ENCODE measurements at regions of chr1 and their contacts with region 1.

Region 1: DNA sequence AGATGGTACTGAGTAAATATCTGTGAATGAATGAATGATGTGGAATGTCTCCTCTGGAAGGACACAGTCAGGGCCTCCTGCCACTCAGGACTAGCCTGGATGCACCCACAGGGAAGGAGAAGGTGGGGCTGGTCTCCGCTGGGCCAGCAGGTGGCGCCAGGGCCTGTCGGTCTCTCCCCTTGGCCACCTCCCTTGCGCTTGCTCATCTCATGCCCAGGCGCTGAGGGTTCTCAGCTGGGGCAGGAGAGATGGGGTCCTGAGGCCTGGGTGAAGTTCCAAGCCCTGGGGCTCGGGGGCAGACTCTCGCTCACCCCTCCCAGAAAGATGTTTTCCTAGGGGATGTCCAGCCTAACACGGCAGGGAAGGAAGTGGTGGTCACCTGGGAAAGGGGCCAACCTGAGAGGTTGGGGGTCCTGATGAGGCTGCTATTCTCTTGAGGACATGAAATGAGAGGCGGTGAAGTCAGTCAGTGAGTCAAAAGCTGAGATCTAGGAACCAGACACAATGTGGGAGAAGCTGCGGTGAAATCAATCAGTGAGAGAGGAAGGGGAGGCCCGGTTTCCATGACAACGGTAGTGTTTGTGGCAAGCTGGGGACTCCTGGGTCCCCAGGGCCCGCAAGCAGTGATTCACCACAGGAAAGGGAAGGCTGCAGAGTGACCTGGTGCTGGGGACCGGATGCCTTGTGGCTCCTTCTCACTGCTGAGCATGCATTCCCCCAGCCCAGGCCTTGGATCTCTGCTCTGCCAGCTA is 14.6 kb upstream of the MEX3A start:
- DNase-seq: peak; percentile 93
- ATAC-seq: peak; percentile 87
- H3K4me3 ChIP-seq: no peak overlapping the region
- H3K27ac ChIP-seq: peak overlapping the region; percentile 79
- H3K4me1 ChIP-seq: peaks cover 38% of the 10 kb centered on the region
- H3K27me3 ChIP-seq: no peaks in the 10 kb centered on the region
- CTCF ChIP-seq: peak; percentile 97 to 99 (median 97)
- EP300 ChIP-seq: peak; percentile 94 to 97
- POLR2A ChIP-seq: no peak
- RAD21 ChIP-seq: peak; percentile 84

Region 2: GRCh38 chr1:156082309-156083091 is 14.3 kb before region 1 on chr1 and contains the start of gene MEX3A:
- CTCF ChIA-PET with region 1: interaction called, 8 read pairs
- POLR2A ChIA-PET with region 1: interaction called, 7 read pairs
- RAD21 ChIA-PET with region 1: interaction called, 4 read pairs
- SMC1A ChIA-PET with region 1: interaction called, 13 read pairs
- in situ Hi-C with region 1: no loop called
- intact Hi-C with region 1: no loop called
- DNase-seq: no peak
- ATAC-seq: peak; percentile 89
- H3K4me3 ChIP-seq: peak within 1 kb of the TSS; percentile 95
- H3K27ac ChIP-seq: no peak within 1 kb of the TSS
- H3K4me1 ChIP-seq: no peaks in the 10 kb centered on the region
- H3K27me3 ChIP-seq: peaks cover 0 to 2% of the 10 kb centered on the region in 2 experiments; a peak in 1 of 4 replicates
- CTCF ChIP-seq: no peak
- EP300 ChIP-seq: no peak
- POLR2A ChIP-seq: no peak
- RAD21 ChIP-seq: no peak
- polyA plus RNA-seq, gene MEX3A: 0.11 to 0.27 TPM

Region 3: DNA sequence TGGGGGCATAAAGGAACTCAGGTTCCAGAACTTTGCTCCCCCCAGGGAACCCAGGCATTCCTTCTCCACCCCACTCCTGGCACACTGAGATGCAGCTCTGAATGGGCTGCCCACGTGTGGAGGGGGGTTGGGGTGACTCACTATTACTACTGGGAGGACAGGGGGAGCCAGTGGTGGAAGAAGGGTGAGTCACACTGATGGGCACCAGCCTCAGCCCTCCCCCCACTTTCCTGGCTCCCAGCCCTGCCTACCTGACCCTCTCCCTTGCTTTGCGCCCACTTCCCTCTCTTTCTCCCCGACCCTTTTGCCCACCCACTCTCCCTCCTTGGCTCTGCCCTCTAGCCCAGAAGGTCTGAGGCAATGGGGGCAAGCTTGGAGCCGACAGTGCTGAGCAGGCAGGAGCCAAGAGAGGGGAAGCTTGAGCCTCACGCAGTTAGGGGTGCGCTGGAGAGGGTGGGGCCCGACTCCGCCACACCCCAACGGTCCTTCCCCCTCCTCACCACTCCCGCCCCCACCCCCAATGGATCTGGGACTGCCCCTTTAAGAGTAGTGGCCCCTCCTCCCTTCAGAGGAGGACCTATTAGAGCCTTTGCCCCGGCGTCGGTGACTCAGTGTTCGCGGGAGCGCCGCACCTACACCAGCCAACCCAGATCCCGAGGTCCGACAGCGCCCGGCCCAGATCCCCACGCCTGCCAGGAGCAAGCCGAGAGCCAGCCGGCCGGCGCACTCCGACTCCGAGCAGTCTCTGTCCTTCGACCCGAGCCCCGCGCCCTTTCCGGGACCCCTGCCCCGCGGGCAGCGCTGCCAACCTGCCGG is 17.5 kb after region 1 on chr1 and contains the start of gene LMNA:
- CTCF ChIA-PET with region 1: interaction called, 1,294 read pairs
- POLR2A ChIA-PET with region 1: interaction called, 25 read pairs
- RAD21 ChIA-PET with region 1: interaction called, 695 read pairs
- SMC1A ChIA-PET with region 1: interaction called, 874 read pairs
- in situ Hi-C with region 1: no loop called
- intact Hi-C with region 1: no loop called
- DNase-seq: peak; percentile 48
- ATAC-seq: peak; percentile 88
- H3K4me3 ChIP-seq: peak within 1 kb of the TSS; percentile 94
- H3K27ac ChIP-seq: peak within 1 kb of the TSS; percentile 53; the same call in 1 of the 2 replicates
- H3K4me1 ChIP-seq: peaks cover 12% of the 10 kb centered on the region
- H3K27me3 ChIP-seq: no peaks in the 10 kb centered on the region
- CTCF ChIP-seq: no peak
- EP300 ChIP-seq: no peak; a peak in 1 of 4 replicates
- POLR2A ChIP-seq: peak; percentile 82
- RAD21 ChIP-seq: no peak
- polyA plus RNA-seq, gene LMNA: 0.42 to 6.0 TPM

Region 4: GRCh38 chr1:156123356-156124196 is 26.8 kb after region 1 on chr1:
- CTCF ChIA-PET with region 1: interaction called, 1,294 read pairs
- POLR2A ChIA-PET with region 1: interaction called, 89 read pairs
- RAD21 ChIA-PET with region 1: interaction called, 695 read pairs
- SMC1A ChIA-PET with region 1: interaction called, 874 read pairs
- in situ Hi-C with region 1: no loop called
- intact Hi-C with region 1: no loop called
- DNase-seq: peak; percentile 46
- ATAC-seq: peak; percentile 22
- H3K4me3 ChIP-seq: 0 out of 2 replicates have a peak overlapping the region, but pooled peaks have one; percentile 30
- H3K27ac ChIP-seq: peak overlapping the region; percentile 94
- H3K4me1 ChIP-seq: peaks cover 69% of the 10 kb centered on the region
- H3K27me3 ChIP-seq: no peaks in the 10 kb centered on the region
- CTCF ChIP-seq: peak; percentile 25 to 32 (median 29); a peak in 4 of 6 replicates
- EP300 ChIP-seq: no peak
- POLR2A ChIP-seq: no peak
- RAD21 ChIP-seq: 0 out of 2 replicates have a peak, but pooled peaks have one; percentile 4

Region 5: GRCh38 chr1:156154317-156154749 is 57.5 kb after region 1 on chr1:
- CTCF ChIA-PET with region 1: interaction called, 9 read pairs
- POLR2A ChIA-PET with region 1: interaction called, 10 read pairs
- RAD21 ChIA-PET with region 1: interaction called, 5 read pairs
- SMC1A ChIA-PET with region 1: interaction called, 6 read pairs
- in situ Hi-C with region 1: no loop called
- intact Hi-C with region 1: no loop called
- DNase-seq: peak; percentile 81
- ATAC-seq: peak; percentile 80
- H3K4me3 ChIP-seq: peak overlapping the region; percentile 94
- H3K27ac ChIP-seq: peak overlapping the region; percentile 82
- H3K4me1 ChIP-seq: peaks cover 88% of the 10 kb centered on the region
- H3K27me3 ChIP-seq: no peaks in the 10 kb centered on the region
- CTCF ChIP-seq: peak in 1 of 3 experiments; percentile 9; a peak in 1 of 6 replicates
- EP300 ChIP-seq: no peak
- POLR2A ChIP-seq: peak; percentile 65
- RAD21 ChIP-seq: no peak

Region 6: GRCh38 chr1:156282479-156283222 is 185.8 kb after region 1 on chr1 and contains the start of gene SMG5:
- CTCF ChIA-PET with region 1: interaction called, 3 read pairs
- POLR2A ChIA-PET with region 1: no interaction called
- RAD21 ChIA-PET with region 1: no interaction called
- SMC1A ChIA-PET with region 1: interaction called, 4 read pairs
- in situ Hi-C with region 1: no loop called
- intact Hi-C with region 1: loop called (anchors 10 kb)
- DNase-seq: peak; percentile 96
- ATAC-seq: peak; percentile 93
- H3K4me3 ChIP-seq: peak within 1 kb of the TSS; percentile 94
- H3K27ac ChIP-seq: peak within 1 kb of the TSS; percentile 86
- H3K4me1 ChIP-seq: peaks cover 15% of the 10 kb centered on the region; the same call in 1 of the 2 replicates
- H3K27me3 ChIP-seq: no peaks in the 10 kb centered on the region
- CTCF ChIP-seq: no peak
- EP300 ChIP-seq: no peak
- POLR2A ChIP-seq: peak; percentile 100
- RAD21 ChIP-seq: no peak
- polyA plus RNA-seq, gene SMG5: 0.76 to 1.9 TPM

Region 7: GRCh38 chr1:156319664-156320063 is 222.8 kb after region 1 on chr1:
- CTCF ChIA-PET with region 1: interaction called, 25 read pairs
- POLR2A ChIA-PET with region 1: no interaction called
- RAD21 ChIA-PET with region 1: interaction called, 12 read pairs
- SMC1A ChIA-PET with region 1: no interaction called
- in situ Hi-C with region 1: no loop called
- intact Hi-C with region 1: loop called (anchors 5 kb)
- DNase-seq: no peak
- ATAC-seq: no peak
- H3K4me3 ChIP-seq: no peak overlapping the region
- H3K27ac ChIP-seq: no peak overlapping the region
- H3K4me1 ChIP-seq: no peaks in the 10 kb centered on the region
- H3K27me3 ChIP-seq: no peaks in the 10 kb centered on the region
- CTCF ChIP-seq: peak; percentile 41 to 51 (median 46)
- EP300 ChIP-seq: no peak
- POLR2A ChIP-seq: no peak
- RAD21 ChIP-seq: peak; percentile 64